Activated CD8-positive, alpha-beta T cell treated with anti-CD3 and anti-CD28 coated beads for 36 hours (primary cell): ENCODE measurements at regions of chr5 and their contacts with region 1.

Region 1: DNA sequence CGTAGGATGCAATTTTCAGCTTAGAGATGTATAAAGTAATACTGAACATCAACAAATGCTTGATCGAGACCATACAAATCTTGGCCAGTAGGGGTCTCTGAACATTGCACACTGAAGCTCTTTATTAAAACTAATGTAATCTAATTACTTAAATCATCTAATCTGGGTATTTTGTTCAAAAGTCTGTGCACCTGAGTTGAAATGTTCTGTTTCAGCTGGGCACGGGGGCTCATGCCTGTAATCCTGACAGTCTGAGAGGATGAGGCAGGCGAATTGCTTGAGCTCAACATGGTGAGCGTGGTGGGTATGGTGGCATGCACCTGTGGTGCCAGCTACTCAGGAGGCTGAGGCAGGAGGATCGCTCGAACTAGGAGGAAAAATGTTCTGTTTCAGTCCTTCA is 41.0 kb downstream of the ESM1 start:
- DNase-seq: peak; percentile 59
- ATAC-seq: peak; percentile 67
- H3K4me3 Mint-ChIP-seq: no peak overlapping the region
- H3K27ac Mint-ChIP-seq: no peak overlapping the region
- H3K4me1 Mint-ChIP-seq: no peaks in the 10 kb centered on the region
- H3K27me3 Mint-ChIP-seq: peaks cover 1% of the 10 kb centered on the region
- CTCF ChIP-seq: peak; percentile 86

Region 2: GRCh38 chr5:54930736-54931135 is 13.6 kb before region 1 on chr5:
- CTCF ChIA-PET with region 1: interaction called, 36 read pairs
- POLR2A ChIA-PET with region 1: no interaction called
- intact Hi-C with region 1: no loop called
- DNase-seq: peak; percentile 54
- ATAC-seq: peak; percentile 64
- H3K4me3 Mint-ChIP-seq: no peak overlapping the region
- H3K27ac Mint-ChIP-seq: no peak overlapping the region
- H3K4me1 Mint-ChIP-seq: peaks cover 8% of the 10 kb centered on the region
- H3K27me3 Mint-ChIP-seq: peaks cover 14% of the 10 kb centered on the region
- CTCF ChIP-seq: no peak

Region 3: DNA sequence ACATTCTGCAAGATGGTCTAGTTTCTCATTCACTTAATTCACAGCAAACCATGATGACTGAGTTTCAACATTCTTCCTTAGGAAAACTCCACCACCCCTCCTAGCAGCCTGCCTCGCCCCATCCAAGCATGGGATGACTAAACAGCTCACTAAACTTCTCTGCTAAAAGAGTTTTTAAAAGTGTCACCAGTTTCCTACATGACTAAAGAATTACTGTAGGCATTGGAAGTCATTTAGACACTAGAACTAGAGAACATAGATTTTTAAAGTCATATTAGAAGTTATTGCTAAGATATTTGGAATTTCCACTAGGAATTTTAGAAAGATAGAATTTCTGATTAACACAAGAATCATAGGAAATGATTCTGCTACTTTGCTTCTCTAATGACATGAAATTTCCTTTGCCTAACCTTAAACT is 46.5 kb after region 1 on chr5:
- CTCF ChIA-PET with region 1: interaction called, 12 read pairs
- POLR2A ChIA-PET with region 1: no interaction called
- intact Hi-C with region 1: no loop called
- DNase-seq: no peak
- ATAC-seq: no peak
- H3K4me3 Mint-ChIP-seq: no peak overlapping the region
- H3K27ac Mint-ChIP-seq: no peak overlapping the region
- H3K4me1 Mint-ChIP-seq: peaks cover 20% of the 10 kb centered on the region
- H3K27me3 Mint-ChIP-seq: no peaks in the 10 kb centered on the region
- CTCF ChIP-seq: no peak

Region 4: GRCh38 chr5:55044175-55044574 is 99.8 kb after region 1 on chr5:
- CTCF ChIA-PET with region 1: interaction called, 10 read pairs
- POLR2A ChIA-PET with region 1: no interaction called
- intact Hi-C with region 1: no loop called
- DNase-seq: no peak
- ATAC-seq: peak; percentile 42
- H3K4me3 Mint-ChIP-seq: no peak overlapping the region
- H3K27ac Mint-ChIP-seq: no peak overlapping the region
- H3K4me1 Mint-ChIP-seq: peaks cover 11% of the 10 kb centered on the region
- H3K27me3 Mint-ChIP-seq: peaks cover 3% of the 10 kb centered on the region
- CTCF ChIP-seq: no peak

Region 5: DNA sequence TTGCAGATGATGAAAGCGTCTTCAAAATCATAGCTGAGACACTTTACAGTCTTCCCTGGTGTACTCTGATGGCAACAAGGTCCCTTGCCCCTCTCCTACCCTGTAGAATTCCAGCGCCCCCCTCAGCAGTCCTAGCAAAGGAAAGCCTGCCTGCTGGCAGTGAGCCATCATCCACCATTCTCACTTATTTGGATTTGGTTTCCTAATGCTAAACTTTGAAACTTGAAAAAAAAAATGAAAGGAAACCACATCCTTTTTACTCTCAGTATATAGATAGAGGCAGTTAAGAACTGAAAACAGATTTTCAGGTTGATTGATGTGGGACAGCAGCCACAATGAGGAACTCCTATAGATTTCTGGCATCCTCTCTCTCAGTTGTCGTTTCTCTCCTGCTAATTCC is 158.0 kb after region 1 on chr5 and contains the start of gene GZMA:
- CTCF ChIA-PET with region 1: interaction called, 19 read pairs
- POLR2A ChIA-PET with region 1: no interaction called
- intact Hi-C with region 1: no loop called
- DNase-seq: peak; percentile 36
- ATAC-seq: peak; percentile 64
- H3K4me3 Mint-ChIP-seq: peak within 1 kb of the TSS; percentile 59
- H3K27ac Mint-ChIP-seq: peak within 1 kb of the TSS; percentile 84
- H3K4me1 Mint-ChIP-seq: peaks cover 78% of the 10 kb centered on the region
- H3K27me3 Mint-ChIP-seq: peaks cover 10% of the 10 kb centered on the region
- CTCF ChIP-seq: no peak
- total RNA-seq, gene GZMA: 17.8 to 18.2 TPM

Region 6: DNA sequence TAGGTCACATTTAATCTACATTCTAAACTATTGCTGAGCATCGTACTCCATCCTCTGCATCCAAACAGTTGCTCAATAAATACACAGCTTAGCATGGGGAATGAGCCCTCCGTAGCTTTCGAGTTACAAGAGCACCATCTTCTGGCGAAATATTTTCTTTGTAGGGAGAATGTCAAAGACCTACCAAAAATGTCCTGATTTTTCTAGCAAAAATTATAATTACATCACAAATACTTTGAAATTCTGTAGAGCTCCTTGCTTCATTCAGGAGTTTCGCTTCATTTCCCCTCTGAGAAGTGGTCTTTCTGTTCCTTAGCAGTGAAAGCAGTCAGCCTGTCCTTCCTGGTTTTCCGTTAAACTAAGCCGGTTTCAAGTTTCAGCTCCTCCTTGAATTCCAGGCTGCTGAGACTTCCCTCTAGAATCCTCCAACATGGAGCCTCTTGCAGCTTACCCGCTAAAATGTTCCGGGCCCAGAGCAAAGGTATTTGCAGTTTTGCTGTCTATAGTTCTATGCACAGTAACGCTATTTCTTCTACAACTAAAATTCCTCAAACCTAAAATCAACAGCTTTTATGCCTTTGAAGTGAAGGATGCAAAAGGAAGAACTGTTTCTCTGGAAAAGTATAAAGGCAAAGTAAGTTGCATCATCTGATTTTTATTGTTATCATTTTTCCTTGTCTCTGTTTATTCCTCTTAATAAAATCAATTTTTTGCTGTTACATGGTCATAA is 215.6 kb after region 1 on chr5 and contains the start of gene GPX8:
- CTCF ChIA-PET with region 1: interaction called, 43 read pairs
- POLR2A ChIA-PET with region 1: no interaction called
- intact Hi-C with region 1: no loop called
- DNase-seq: peak; percentile 20
- ATAC-seq: peak; percentile 37
- H3K4me3 Mint-ChIP-seq: no peak within 1 kb of the TSS
- H3K27ac Mint-ChIP-seq: no peak within 1 kb of the TSS
- H3K4me1 Mint-ChIP-seq: no peaks in the 10 kb centered on the region
- H3K27me3 Mint-ChIP-seq: peaks cover 20% of the 10 kb centered on the region
- CTCF ChIP-seq: peak; percentile 67
- total RNA-seq, gene GPX8: not detected

Region 7: GRCh38 chr5:55320571-55320970 is 376.2 kb after region 1 on chr5:
- CTCF ChIA-PET with region 1: no interaction called
- POLR2A ChIA-PET with region 1: no interaction called
- intact Hi-C with region 1: no loop called
- DNase-seq: no peak
- ATAC-seq: no peak
- H3K4me3 Mint-ChIP-seq: no peak overlapping the region
- H3K27ac Mint-ChIP-seq: no peak overlapping the region
- H3K4me1 Mint-ChIP-seq: peaks cover 37% of the 10 kb centered on the region
- H3K27me3 Mint-ChIP-seq: no peaks in the 10 kb centered on the region
- CTCF ChIP-seq: no peak

Region 8: DNA sequence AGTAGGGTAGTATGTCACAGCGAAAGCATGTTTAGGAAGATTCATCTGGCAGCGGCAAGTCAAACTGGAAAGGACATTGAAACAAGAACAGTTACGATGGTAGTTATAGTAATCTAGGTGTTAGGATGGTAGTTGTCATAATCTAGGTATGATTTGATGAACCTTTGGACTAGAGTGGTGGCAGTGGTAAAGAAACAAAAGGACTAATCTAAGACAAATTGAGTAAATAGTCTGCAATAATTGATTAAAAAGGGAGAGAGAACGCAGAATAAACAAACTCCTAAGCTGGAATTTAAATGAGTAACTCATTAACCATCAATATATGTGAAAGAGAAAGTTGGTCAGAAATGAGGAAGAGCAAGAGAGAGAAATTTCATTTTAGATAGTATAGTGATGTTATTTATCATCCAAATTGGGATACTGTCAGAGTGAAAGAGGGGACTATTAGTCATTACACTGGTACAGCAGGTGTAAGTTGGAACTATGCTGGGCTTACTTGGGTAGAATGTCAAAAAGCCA is 420.2 kb after region 1 on chr5:
- CTCF ChIA-PET with region 1: no interaction called
- POLR2A ChIA-PET with region 1: no interaction called
- intact Hi-C with region 1: no loop called
- DNase-seq: no peak
- ATAC-seq: peak; percentile 77
- H3K4me3 Mint-ChIP-seq: no peak overlapping the region
- H3K27ac Mint-ChIP-seq: peak overlapping the region; percentile 1
- H3K4me1 Mint-ChIP-seq: peaks cover 15% of the 10 kb centered on the region
- H3K27me3 Mint-ChIP-seq: no peaks in the 10 kb centered on the region
- CTCF ChIP-seq: no peak